ENCODE measurements at regions of chr19 and their contacts with region 1.

Region 1: DNA sequence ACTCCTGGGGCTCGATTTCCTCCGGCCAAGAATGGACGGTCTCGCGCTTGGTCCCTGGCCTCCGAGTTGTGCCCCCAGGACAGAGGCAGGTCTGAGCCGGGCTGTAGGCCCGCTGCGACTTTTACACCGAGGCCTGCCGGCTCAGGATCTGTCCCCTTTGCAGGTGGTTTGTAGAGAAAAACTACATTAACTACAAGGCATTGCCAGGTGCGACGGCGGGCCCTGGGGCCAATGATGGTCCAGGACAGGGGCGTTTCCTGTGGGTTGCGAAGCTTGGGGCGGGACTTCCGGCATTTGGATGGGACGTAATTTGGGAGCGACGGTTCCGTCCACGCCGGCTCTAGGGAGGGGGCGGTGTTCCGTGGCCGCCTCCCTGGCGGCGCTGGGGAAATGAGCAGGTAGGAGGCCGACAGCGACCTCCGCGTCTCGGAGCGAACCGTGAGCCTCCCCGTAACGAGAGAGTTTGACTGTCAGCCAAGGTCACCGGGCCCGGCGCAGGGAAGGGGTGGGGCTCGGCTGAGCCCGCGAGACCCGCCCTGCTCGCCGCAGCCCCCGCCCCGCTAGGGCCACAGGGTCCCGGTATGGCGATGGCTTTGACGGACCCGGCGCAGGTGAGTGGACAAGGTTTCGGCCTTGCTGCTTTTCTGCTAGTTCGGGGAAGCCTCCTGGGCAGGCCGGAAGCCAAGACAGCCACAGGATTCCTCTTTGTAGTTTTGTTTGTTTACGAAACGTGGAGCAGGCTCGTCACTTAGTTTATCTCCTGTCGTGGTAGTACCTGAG is at the start of gene ZNF805:
- DNase-seq: peak; percentile 91 to 98 (median 97)
- ATAC-seq: peak; percentile 89
- H3K4me3 ChIP-seq: peak within 1 kb of the TSS; percentile 70 to 88
- H3K4me3 Mint-ChIP-seq: peak within 1 kb of the TSS; percentile 93
- H3K27ac ChIP-seq: peak within 1 kb of the TSS; percentile 90 to 91
- H3K27ac Mint-ChIP-seq: peak within 1 kb of the TSS; percentile 97
- H3K4me1 ChIP-seq: peaks cover 20% of the 10 kb centered on the region
- H3K4me1 Mint-ChIP-seq: peaks cover 45% of the 10 kb centered on the region
- H3K27me3 ChIP-seq: no peaks in the 10 kb centered on the region
- H3K27me3 Mint-ChIP-seq: no peaks in the 10 kb centered on the region
- CTCF ChIP-seq: no peak
- total RNA-seq, gene ZNF805: 49.1 to 49.2 TPM

Region 2: DNA sequence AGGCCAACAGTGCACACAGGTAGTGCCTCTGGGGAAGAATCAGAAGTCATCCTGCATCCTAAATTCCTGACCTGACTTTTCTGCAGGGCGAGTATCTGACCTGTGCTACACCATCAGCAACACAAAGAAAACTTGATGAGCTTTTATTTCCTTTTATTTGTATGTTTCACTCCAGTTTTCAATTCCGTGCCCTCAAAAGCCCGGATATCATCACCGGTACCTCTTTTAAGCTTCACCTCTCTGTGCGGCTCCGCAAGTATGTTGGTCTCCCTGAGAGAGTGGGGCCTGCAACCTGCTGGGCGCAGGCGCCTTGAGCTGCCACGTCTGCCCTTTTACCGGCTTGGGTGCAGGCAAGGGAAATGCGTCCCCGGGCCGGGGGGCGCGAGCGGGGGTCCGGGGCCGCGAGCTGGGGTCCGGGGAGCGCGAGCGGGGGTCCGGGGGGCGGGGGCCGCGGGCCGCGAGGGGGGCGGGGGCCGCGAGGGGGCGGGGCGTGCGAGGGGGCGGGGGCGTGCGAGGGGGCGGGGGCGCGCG is 68.9 kb before region 1 on chr19:
- CTCF ChIA-PET with region 1: no interaction called
- POLR2A ChIA-PET with region 1: no interaction called
- intact Hi-C with region 1: loop called (anchors 2 kb)
- DNase-seq: peak in 5 of 9 experiments; percentile 44 to 78 (median 53)
- ATAC-seq: peak; percentile 82
- H3K4me3 ChIP-seq: peak overlapping the region; percentile 33 to 41
- H3K4me3 Mint-ChIP-seq: peak overlapping the region; percentile 82
- H3K27ac ChIP-seq: peak overlapping the region in 1 of 2 experiments; percentile 42
- H3K27ac Mint-ChIP-seq: peak overlapping the region; percentile 81
- H3K4me1 ChIP-seq: peaks cover 4% of the 10 kb centered on the region
- H3K4me1 Mint-ChIP-seq: peaks cover 16% of the 10 kb centered on the region
- H3K27me3 ChIP-seq: no peaks in the 10 kb centered on the region
- H3K27me3 Mint-ChIP-seq: no peaks in the 10 kb centered on the region
- CTCF ChIP-seq: no peak

Region 3: GRCh38 chr19:57302020-57302465 is 61.5 kb after region 1 on chr19:
- CTCF ChIA-PET with region 1: no interaction called
- POLR2A ChIA-PET with region 1: no interaction called
- intact Hi-C with region 1: no loop called
- DNase-seq: no peak
- ATAC-seq: no peak
- H3K4me3 ChIP-seq: no peak overlapping the region
- H3K4me3 Mint-ChIP-seq: no peak overlapping the region
- H3K27ac ChIP-seq: no peak overlapping the region
- H3K27ac Mint-ChIP-seq: no peak overlapping the region
- H3K4me1 ChIP-seq: no peaks in the 10 kb centered on the region
- H3K4me1 Mint-ChIP-seq: peaks cover 18% of the 10 kb centered on the region
- H3K27me3 ChIP-seq: no peaks in the 10 kb centered on the region
- H3K27me3 Mint-ChIP-seq: no peaks in the 10 kb centered on the region
- CTCF ChIP-seq: no peak

Region 4: GRCh38 chr19:57320180-57321084 is 79.9 kb after region 1 on chr19 and contains the start of gene ZNF543:
- CTCF ChIA-PET with region 1: no interaction called
- POLR2A ChIA-PET with region 1: no interaction called
- intact Hi-C with region 1: loop called (anchors 1 kb)
- DNase-seq: peak; percentile 85 to 96 (median 91)
- ATAC-seq: peak; percentile 95
- H3K4me3 ChIP-seq: peak within 1 kb of the TSS; percentile 61 to 94
- H3K4me3 Mint-ChIP-seq: peak within 1 kb of the TSS; percentile 92
- H3K27ac ChIP-seq: peak within 1 kb of the TSS; percentile 78 to 94
- H3K27ac Mint-ChIP-seq: peak within 1 kb of the TSS; percentile 96
- H3K4me1 ChIP-seq: peaks cover 21% of the 10 kb centered on the region
- H3K4me1 Mint-ChIP-seq: peaks cover 32% of the 10 kb centered on the region
- H3K27me3 ChIP-seq: peaks cover 6 to 7% of the 10 kb centered on the region in 2 experiments
- H3K27me3 Mint-ChIP-seq: peaks cover 22% of the 10 kb centered on the region
- CTCF ChIP-seq: no peak
- total RNA-seq, gene ZNF543: 4.3 to 4.9 TPM

Region 5: GRCh38 chr19:57389730-57390598 is 149.5 kb after region 1 on chr19 and contains the start of gene ZNF548:
- CTCF ChIA-PET with region 1: no interaction called
- POLR2A ChIA-PET with region 1: interaction called, 3 read pairs
- intact Hi-C with region 1: loop called (anchors 1 kb)
- DNase-seq: peak; percentile 93 to 100 (median 98)
- ATAC-seq: peak; percentile 95
- H3K4me3 ChIP-seq: peak within 1 kb of the TSS; percentile 79 to 93
- H3K4me3 Mint-ChIP-seq: peak within 1 kb of the TSS; percentile 95
- H3K27ac ChIP-seq: peak within 1 kb of the TSS; percentile 92 to 98
- H3K27ac Mint-ChIP-seq: peak within 1 kb of the TSS; percentile 97
- H3K4me1 ChIP-seq: peaks cover 19% of the 10 kb centered on the region
- H3K4me1 Mint-ChIP-seq: peaks cover 43% of the 10 kb centered on the region
- H3K27me3 ChIP-seq: no peaks in the 10 kb centered on the region
- H3K27me3 Mint-ChIP-seq: no peaks in the 10 kb centered on the region
- CTCF ChIP-seq: no peak
- total RNA-seq, gene ZNF548: 75.4 to 79.1 TPM

Region 6: DNA sequence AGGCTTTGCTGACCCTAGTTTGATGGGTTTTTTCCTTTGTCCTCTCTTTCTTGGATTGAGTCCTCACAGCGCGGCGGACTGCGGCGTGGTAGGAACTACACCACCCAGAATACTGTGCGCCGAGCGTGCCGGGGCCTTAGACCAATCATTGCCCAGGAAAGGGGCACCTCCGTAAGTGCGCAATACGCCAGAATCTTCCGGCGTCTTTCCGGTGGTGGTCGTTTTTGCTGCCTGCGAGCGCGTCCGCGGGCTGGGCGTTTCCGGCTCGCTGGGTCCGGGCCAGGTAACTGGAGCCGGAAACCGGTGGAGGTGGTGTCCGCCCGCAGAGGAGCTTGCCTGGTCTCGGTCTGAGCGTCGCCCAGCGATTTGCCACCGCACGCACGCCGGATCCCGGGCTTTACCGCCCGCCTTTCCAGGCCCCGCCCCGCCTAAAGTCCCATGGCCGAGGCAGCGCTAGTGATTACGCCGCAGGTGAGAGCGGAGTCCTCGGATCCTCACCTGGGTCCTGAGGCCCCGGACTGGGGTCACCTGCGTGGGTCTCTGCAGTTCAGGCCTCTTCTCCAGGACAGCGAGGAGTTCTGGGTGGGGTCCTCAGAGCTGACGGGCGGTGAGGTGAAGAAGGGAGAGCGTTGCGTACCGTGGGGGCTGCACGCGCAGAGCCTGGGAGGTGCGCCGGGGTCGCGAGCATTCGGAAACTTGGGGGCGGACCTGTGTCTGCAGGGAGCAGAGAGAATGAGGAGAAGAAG is 286.8 kb after region 1 on chr19 and contains the start of gene ZNF549:
- CTCF ChIA-PET with region 1: no interaction called
- POLR2A ChIA-PET with region 1: no interaction called
- intact Hi-C with region 1: loop called in 1 of 2 experiments (anchors 1 kb)
- DNase-seq: peak; percentile 77 to 95 (median 89)
- ATAC-seq: peak; percentile 98
- H3K4me3 ChIP-seq: peak within 1 kb of the TSS; percentile 97
- H3K4me3 Mint-ChIP-seq: peak within 1 kb of the TSS; percentile 94
- H3K27ac ChIP-seq: peak within 1 kb of the TSS; percentile 80 to 88
- H3K27ac Mint-ChIP-seq: peak within 1 kb of the TSS; percentile 96
- H3K4me1 ChIP-seq: peaks cover 16% of the 10 kb centered on the region
- H3K4me1 Mint-ChIP-seq: peaks cover 32% of the 10 kb centered on the region
- H3K27me3 ChIP-seq: no peaks in the 10 kb centered on the region
- H3K27me3 Mint-ChIP-seq: no peaks in the 10 kb centered on the region
- CTCF ChIP-seq: no peak
- total RNA-seq, gene ZNF549: 14.6 to 17.1 TPM

Region 7: GRCh38 chr19:57719901-57720519 is 479.5 kb after region 1 on chr19:
- CTCF ChIA-PET with region 1: no interaction called
- POLR2A ChIA-PET with region 1: no interaction called
- intact Hi-C with region 1: loop called in 1 of 2 experiments (anchors 5 kb)
- DNase-seq: peak in 1 of 9 experiments; percentile 23
- ATAC-seq: no peak
- H3K4me3 ChIP-seq: peak overlapping the region in 1 of 2 experiments; percentile 8
- H3K4me3 Mint-ChIP-seq: no peak overlapping the region
- H3K27ac ChIP-seq: no peak overlapping the region
- H3K27ac Mint-ChIP-seq: no peak overlapping the region
- H3K4me1 ChIP-seq: no peaks in the 10 kb centered on the region
- H3K4me1 Mint-ChIP-seq: peaks cover 14% of the 10 kb centered on the region
- H3K27me3 ChIP-seq: no peaks in the 10 kb centered on the region
- H3K27me3 Mint-ChIP-seq: no peaks in the 10 kb centered on the region
- CTCF ChIP-seq: no peak

Region 8: DNA sequence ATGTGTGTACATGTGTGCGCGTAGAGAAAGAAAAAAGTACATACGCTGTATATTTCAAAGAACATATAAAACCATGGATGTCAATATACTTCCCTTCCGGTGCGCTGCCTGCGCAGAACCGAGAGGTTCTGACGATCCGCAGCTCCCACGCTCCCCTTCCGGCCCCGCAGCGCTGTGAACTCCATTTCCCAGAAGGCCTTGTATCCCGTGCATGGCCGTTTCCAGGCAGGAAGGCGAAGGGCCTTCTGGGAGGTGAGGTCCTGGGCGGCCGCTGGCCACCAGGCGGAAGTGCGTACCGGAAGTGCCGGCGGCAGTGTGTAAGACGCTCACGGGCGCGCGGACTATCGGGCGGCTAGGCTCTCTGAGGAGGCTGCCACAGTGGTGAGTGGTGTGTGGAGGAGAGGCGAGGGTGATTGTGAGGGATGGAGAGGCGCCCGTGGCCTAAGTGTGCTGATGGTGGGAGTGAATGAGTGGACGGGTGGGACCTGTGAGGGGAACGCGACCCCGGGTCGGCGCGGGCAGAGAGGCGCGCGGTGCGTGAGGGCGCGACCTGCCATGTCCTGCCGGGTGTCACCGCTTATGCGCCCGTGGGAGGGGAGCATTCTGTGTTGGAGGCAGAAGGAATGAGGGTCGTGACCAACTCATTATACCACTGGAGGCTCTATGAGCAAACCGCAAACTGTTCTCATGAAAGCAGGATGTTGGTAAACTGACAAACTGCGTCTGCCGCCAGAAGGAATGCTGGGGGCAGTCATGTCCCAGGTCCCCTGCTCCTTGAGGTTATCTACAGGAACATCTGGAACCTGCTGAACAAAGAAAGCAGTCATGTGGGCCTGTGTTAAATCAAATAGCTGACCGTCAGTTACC is 1064.8 kb after region 1 on chr19 and contains the start of gene ERVK3-1:
- CTCF ChIA-PET with region 1: no interaction called
- POLR2A ChIA-PET with region 1: no interaction called
- intact Hi-C with region 1: loop called in 1 of 2 experiments (anchors 1 kb)
- DNase-seq: peak; percentile 89 to 99 (median 93)
- ATAC-seq: peak; percentile 96
- H3K4me3 ChIP-seq: peak within 1 kb of the TSS; percentile 82 to 89
- H3K4me3 Mint-ChIP-seq: peak within 1 kb of the TSS; percentile 98
- H3K27ac ChIP-seq: peak within 1 kb of the TSS; percentile 93 to 95
- H3K27ac Mint-ChIP-seq: peak within 1 kb of the TSS; percentile 99
- H3K4me1 ChIP-seq: peaks cover 27% of the 10 kb centered on the region
- H3K4me1 Mint-ChIP-seq: peaks cover 53% of the 10 kb centered on the region
- H3K27me3 ChIP-seq: no peaks in the 10 kb centered on the region
- H3K27me3 Mint-ChIP-seq: no peaks in the 10 kb centered on the region
- CTCF ChIP-seq: no peak
- total RNA-seq, gene ERVK3-1: 174 to 182 TPM